Activated CD4-positive, alpha-beta T cell treated with anti-CD3 and anti-CD28 coated beads for 36 hours (primary cell): ENCODE measurements at regions of chr9 and their contacts with region 1.

Region 1: GRCh38 chr9:68802525-68803015 is 97.5 kb downstream of the PIP5K1B start:
- DNase-seq: peak; percentile 77
- ATAC-seq: peak; percentile 98
- H3K4me3 Mint-ChIP-seq: no peak overlapping the region
- H3K27ac Mint-ChIP-seq: no peak overlapping the region
- H3K4me1 Mint-ChIP-seq: peaks cover 3% of the 10 kb centered on the region
- H3K27me3 Mint-ChIP-seq: peaks cover 2% of the 10 kb centered on the region

Region 2: GRCh38 chr9:68653141-68653595 is 149.4 kb before region 1 on chr9:
- CTCF ChIA-PET with region 1: no interaction called
- POLR2A ChIA-PET with region 1: no interaction called
- intact Hi-C with region 1: loop called in 1 of 2 experiments (anchors 2 kb)
- DNase-seq: peak; percentile 67
- ATAC-seq: peak; percentile 73
- H3K4me3 Mint-ChIP-seq: no peak overlapping the region
- H3K27ac Mint-ChIP-seq: peak overlapping the region; percentile 72
- H3K4me1 Mint-ChIP-seq: peaks cover 35% of the 10 kb centered on the region
- H3K27me3 Mint-ChIP-seq: peaks cover 22% of the 10 kb centered on the region

Region 3: DNA sequence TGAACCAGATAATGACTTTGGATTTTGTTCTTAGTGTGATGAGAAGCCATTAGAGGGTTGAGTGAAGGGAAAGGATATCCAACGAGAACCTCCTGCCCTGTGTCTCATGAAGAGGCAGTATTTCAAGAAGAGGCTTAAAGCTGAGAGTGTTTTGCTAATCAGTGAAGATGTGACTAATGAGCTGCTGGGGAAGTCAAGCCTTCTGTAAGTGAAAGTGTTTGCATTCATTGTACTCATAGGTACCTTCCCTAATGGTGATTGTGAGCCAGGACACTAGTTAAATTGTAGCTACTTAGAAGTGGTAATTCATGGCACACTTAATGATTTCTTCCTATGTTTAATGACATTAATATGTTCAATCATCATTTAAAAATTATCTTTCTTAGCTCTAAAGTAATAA is 73.8 kb before region 1 on chr9:
- CTCF ChIA-PET with region 1: no interaction called
- POLR2A ChIA-PET with region 1: no interaction called
- intact Hi-C with region 1: no loop called
- DNase-seq: no peak
- ATAC-seq: no peak
- H3K4me3 Mint-ChIP-seq: no peak overlapping the region
- H3K27ac Mint-ChIP-seq: no peak overlapping the region
- H3K4me1 Mint-ChIP-seq: no peaks in the 10 kb centered on the region
- H3K27me3 Mint-ChIP-seq: peaks cover 18% of the 10 kb centered on the region

Region 4: DNA sequence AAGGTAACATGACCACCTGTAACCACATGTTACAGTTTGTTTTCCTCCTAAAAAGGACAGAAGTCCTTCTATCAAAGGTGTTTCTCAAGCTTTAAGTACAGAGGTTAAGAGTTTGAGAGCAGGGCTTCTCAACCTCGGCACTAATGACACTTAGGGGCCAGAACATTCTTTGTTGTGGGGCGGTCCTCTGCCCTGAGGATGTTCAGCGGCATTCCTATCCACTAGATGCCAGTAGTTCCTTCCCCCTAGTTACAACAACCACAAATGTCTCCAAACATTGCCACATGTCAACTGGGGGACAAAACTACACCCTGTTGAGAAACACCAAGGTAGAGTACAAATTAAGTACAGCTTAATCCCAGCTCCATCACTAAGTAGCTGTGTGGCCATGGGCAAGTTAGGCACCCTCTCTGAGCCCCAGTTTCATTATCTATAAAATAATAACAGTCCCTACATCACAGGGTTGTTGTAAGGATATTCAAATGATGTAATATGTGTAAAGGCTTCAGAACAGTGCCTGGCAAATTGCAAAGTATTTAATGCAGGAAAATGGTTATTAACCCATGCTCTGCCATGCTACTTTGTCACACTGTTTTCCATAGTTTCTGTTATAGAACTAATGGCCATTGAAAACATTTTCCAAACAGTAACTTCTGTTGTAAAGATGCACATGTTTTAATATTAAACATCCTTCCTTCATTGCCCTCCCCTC is 52.8 kb before region 1 on chr9:
- CTCF ChIA-PET with region 1: no interaction called
- POLR2A ChIA-PET with region 1: no interaction called
- intact Hi-C with region 1: loop called in 1 of 2 experiments (anchors 5 kb)
- DNase-seq: no peak
- ATAC-seq: no peak
- H3K4me3 Mint-ChIP-seq: no peak overlapping the region
- H3K27ac Mint-ChIP-seq: no peak overlapping the region
- H3K4me1 Mint-ChIP-seq: no peaks in the 10 kb centered on the region
- H3K27me3 Mint-ChIP-seq: peaks cover 2% of the 10 kb centered on the region